HEK293 (cell line): ENCODE measurements at regions of chr14 and their contacts with region 1.

Region 1: DNA sequence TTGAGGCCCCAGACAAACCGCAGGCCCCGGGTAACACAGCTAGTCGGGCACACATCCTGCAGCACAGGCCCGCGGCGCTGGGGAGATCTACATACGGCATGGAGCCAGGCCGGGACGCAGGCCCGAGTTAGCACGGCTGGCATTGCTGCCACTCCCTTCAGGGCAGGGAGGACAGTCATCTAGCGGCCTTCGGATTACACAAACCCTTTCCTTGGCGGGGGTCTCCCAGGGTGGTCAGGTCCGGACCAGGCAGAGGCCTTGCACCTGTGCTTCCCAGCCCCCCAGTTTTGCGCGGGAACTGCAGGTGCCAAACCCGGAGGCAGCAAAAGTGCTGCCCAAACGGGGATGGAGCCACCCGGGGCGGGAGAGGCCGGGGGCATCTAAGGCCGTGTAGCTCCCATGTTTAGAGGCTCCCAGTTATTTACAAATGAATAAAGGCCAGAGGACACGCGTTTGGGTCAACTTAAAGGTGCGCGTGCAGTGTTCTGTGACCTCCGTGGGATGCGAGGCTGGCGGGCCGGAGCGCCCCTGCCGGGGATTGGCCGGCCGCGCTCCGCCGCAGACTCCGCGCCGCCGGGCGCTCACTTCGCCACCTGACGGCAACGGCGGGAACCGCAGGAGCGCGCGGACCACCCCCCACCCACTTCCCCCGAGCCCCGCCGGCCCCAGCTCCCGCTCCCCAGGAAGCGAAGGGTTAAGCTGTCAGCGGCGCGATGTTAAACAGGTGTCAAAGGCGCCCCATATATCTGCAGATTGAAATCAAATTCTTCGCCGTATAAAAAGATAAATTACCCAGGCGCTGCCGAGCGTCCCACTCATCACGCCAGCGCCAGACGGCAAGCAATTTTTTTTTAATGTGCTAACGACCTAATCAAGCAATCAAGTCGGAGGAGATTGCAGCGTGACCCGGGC is 18.1 kb downstream of the VSX2 start:
- H3K4me3 ChIP-seq: peak overlapping the region; percentile 50
- H3K27ac ChIP-seq: no peak overlapping the region
- H3K4me1 ChIP-seq: no peaks in the 10 kb centered on the region; the same call in 1 of the 2 replicates
- CTCF ChIP-seq: 0 out of 2 replicates have a peak, but pooled peaks have one; percentile 34

Region 2: DNA sequence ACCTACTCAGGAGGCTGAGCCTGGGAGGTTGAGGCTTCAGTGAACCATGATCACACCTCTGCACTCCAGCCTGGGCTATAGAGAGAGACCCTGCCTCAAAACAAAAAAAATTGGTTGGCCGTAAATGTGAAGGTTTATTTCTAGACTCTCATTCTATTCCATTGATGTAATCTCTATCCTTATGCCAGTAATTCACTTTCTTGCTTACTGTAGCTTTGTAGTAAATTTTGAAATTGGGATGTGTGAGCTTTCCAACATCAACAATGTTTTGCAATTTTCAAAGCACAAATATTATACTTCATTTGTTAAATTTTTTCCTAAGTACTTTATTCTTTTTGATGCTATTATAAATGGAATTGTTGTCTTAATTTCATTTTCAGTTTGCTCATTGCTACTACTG is 148.0 kb before region 1 on chr14:
- CTCF ChIA-PET with region 1: interaction called, 71 read pairs
- POLR2A ChIA-PET with region 1: no interaction called
- H3K4me3 ChIP-seq: no peak overlapping the region
- H3K27ac ChIP-seq: no peak overlapping the region
- H3K4me1 ChIP-seq: no peaks in the 10 kb centered on the region
- CTCF ChIP-seq: no peak

Region 3: GRCh38 chr14:74140374-74140850 is 116.9 kb before region 1 on chr14:
- CTCF ChIA-PET with region 1: interaction called, 13 read pairs
- POLR2A ChIA-PET with region 1: no interaction called
- H3K4me3 ChIP-seq: no peak overlapping the region
- H3K27ac ChIP-seq: 0 out of 2 replicates have a peak overlapping the region, but pooled peaks have one; percentile 3
- H3K4me1 ChIP-seq: peaks cover 55% of the 10 kb centered on the region
- CTCF ChIP-seq: no peak

Region 4: DNA sequence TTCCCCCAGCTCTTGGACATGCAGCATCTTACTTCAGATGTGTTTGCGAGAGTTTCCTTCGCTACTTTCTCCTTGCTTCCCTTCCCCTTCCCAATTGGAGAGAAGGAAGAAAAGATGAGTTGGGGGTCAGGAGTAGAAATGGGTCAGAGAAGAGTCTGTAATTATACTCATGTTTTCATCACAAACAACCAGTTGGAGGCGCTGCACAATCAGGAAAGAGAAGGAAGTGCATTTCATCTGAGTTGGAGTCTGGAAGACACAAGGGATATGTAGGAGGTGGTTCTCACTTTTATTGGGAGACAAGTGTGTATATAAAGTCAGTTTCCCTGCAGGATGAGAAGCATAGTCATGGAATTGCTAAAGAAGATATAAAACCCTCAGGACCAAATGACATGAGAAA is 49.4 kb before region 1 on chr14:
- CTCF ChIA-PET with region 1: interaction called, 20 read pairs
- POLR2A ChIA-PET with region 1: no interaction called
- H3K4me3 ChIP-seq: no peak overlapping the region
- H3K27ac ChIP-seq: no peak overlapping the region
- H3K4me1 ChIP-seq: no peaks in the 10 kb centered on the region
- CTCF ChIP-seq: no peak

Region 5: DNA sequence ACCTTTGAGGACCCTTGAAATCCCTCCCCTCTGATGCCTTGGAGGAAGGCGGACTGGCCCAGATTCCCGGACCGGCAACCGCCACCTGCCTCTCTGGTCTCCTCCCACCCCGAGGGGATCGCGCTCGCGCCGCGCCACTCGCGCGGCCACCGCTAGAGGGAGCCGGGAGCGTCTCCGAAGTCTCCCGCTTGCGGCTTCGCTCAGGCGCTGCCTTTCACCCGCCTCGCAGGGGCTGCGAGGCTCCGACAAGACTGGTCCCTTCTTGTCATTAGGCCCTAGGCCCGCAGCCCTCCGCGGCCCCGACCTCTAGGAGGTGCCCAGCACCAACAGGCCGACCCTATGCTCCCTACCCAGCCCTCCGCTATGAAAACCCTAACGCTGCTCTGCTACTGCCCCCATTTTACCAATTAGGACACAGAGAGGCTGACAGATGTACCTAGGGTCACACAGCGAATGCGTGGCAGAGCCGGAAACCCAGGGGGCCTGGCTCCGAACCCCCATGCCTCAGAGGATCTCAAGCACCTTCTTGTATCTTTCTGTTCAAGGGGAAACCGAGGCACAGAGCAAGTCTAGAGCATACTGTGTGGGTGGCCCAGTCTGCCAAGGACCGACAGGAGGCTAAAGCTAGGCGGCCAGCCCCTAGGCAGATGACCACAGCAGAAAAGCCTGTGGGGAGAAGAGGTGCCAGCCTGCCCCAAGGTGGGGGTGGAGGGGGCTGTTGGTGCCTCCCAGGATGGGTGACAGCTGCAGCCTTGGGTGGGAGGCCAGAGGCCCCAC is 39.5 kb before region 1 on chr14:
- CTCF ChIA-PET with region 1: interaction called, 17 read pairs
- POLR2A ChIA-PET with region 1: no interaction called
- H3K4me3 ChIP-seq: no peak overlapping the region
- H3K27ac ChIP-seq: no peak overlapping the region
- H3K4me1 ChIP-seq: no peaks in the 10 kb centered on the region
- CTCF ChIP-seq: peak; percentile 80

Region 6: GRCh38 chr14:74223016-74223415 is 34.3 kb before region 1 on chr14:
- CTCF ChIA-PET with region 1: interaction called, 17 read pairs
- POLR2A ChIA-PET with region 1: no interaction called
- H3K4me3 ChIP-seq: no peak overlapping the region
- H3K27ac ChIP-seq: no peak overlapping the region
- H3K4me1 ChIP-seq: no peaks in the 10 kb centered on the region
- CTCF ChIP-seq: no peak

Region 7: DNA sequence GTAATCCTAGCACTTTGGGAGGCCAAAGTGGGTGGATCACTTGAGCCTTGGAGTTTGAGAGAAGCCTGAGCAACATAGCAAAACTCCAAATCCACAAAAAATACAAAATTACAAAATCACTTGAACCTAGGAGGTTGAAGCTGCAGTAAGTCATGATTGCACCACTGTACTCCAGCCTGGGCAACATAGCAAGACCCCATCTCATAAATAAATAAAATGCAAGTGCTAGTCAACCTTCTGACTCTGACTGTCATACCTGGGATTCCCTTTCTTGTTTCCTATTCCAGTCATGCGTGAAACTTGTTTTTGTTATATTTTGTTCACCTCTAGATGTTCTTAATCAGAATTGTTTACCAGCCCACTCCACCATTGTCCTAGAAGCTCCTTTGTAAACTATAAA is 14.0 kb after region 1 on chr14:
- CTCF ChIA-PET with region 1: interaction called, 11 read pairs
- POLR2A ChIA-PET with region 1: no interaction called
- H3K4me3 ChIP-seq: no peak overlapping the region
- H3K27ac ChIP-seq: no peak overlapping the region
- H3K4me1 ChIP-seq: no peaks in the 10 kb centered on the region; the same call in 1 of the 2 replicates
- CTCF ChIP-seq: no peak